PC-9 (cell line): ENCODE measurements at regions of chr21 and their contacts with region 1.

Region 1: GRCh38 chr21:33441489-33442477 is 38.0 kb downstream of the TMEM50B start:
- DNase-seq: peak in 1 of 2 experiments; percentile 22
- H3K4me3 ChIP-seq: no peak overlapping the region
- H3K27ac ChIP-seq: no peak overlapping the region
- H3K4me1 ChIP-seq: no peaks in the 10 kb centered on the region
- H3K27me3 ChIP-seq: no peaks in the 10 kb centered on the region
- CTCF ChIP-seq: no peak

Region 2: DNA sequence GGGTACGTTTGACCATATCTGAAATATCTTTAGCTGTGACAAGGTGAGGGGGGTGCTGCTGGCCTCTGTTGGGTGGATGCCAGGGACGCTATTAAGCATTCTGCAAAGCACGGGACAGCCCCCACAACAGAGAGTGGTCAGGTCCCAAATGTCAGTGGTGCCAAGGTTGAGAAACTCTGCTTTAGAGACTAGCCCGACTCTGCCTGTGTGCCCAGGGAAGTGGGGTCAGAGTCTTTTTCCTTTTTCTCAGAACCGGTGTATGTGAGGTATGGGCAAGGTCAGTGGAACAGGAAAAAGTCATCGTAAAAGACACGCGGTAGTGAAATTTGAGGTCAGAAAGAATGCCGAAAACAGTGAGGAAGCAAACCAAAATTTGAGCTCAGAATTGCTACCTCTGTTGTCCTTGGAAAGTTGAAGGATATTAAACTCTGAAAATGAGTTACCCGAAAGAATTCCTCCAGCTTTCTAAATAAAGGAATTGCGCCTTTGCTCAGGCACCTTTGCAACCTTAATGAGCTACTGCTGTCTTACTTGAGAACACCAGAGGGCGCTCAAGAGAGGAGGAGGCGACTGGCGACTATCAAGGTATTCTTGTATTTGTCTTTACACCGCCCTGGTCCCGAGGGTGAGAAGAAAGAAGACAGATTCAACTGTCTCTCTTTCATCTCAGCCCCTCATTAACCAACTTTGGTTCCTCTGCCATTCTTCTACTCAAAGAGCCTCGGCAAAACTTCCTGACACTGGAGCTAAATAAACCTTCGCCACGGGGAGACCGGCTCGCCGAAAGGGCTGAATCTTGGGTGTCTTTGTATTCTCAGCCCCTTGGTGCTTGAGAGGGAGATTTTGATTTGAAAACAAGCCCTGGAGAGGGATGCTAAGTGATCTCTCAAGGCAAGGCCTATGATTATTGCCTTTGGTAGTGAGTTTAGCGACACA is 501.4 kb before region 1 on chr21:
- CTCF ChIA-PET with region 1: no interaction called
- POLR2A ChIA-PET with region 1: no interaction called
- intact Hi-C with region 1: loop called (anchors 10 kb)
- DNase-seq: peak in 1 of 2 experiments; percentile 5
- H3K4me3 ChIP-seq: no peak overlapping the region
- H3K27ac ChIP-seq: no peak overlapping the region
- H3K4me1 ChIP-seq: no peaks in the 10 kb centered on the region
- H3K27me3 ChIP-seq: peaks cover 26% of the 10 kb centered on the region; the same call in 1 of the 2 replicates
- CTCF ChIP-seq: peak; percentile 65

Region 3: DNA sequence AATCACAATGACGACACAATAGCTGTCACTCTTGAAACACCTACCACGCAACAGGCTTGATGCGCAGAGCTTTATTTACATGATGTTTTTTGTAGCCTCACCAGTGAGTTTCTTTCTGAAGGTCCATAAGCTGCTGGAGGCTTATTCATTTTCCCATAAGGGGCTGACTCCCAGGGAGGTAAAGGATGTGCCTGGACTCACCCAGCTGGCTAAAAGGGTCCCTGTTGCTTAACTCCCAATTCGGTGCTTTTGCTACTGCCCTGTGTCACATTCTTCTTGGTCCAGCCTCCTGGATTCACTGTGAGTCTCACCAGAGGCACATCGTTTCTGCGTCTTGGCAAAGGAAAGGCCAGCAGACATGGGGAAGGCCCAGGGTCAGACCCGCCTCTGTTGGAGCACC is 460.7 kb before region 1 on chr21:
- CTCF ChIA-PET with region 1: no interaction called
- POLR2A ChIA-PET with region 1: no interaction called
- intact Hi-C with region 1: no loop called
- DNase-seq: no peak
- H3K4me3 ChIP-seq: no peak overlapping the region
- H3K27ac ChIP-seq: no peak overlapping the region
- H3K4me1 ChIP-seq: no peaks in the 10 kb centered on the region
- H3K27me3 ChIP-seq: peaks cover 47% of the 10 kb centered on the region
- CTCF ChIP-seq: no peak

Region 4: GRCh38 chr21:33206771-33207325 is 234.9 kb before region 1 on chr21:
- CTCF ChIA-PET with region 1: no interaction called
- POLR2A ChIA-PET with region 1: no interaction called
- intact Hi-C with region 1: no loop called
- DNase-seq: no peak
- H3K4me3 ChIP-seq: no peak overlapping the region
- H3K27ac ChIP-seq: no peak overlapping the region
- H3K4me1 ChIP-seq: peaks cover 11% of the 10 kb centered on the region
- H3K27me3 ChIP-seq: no peaks in the 10 kb centered on the region
- CTCF ChIP-seq: no peak

Region 5: DNA sequence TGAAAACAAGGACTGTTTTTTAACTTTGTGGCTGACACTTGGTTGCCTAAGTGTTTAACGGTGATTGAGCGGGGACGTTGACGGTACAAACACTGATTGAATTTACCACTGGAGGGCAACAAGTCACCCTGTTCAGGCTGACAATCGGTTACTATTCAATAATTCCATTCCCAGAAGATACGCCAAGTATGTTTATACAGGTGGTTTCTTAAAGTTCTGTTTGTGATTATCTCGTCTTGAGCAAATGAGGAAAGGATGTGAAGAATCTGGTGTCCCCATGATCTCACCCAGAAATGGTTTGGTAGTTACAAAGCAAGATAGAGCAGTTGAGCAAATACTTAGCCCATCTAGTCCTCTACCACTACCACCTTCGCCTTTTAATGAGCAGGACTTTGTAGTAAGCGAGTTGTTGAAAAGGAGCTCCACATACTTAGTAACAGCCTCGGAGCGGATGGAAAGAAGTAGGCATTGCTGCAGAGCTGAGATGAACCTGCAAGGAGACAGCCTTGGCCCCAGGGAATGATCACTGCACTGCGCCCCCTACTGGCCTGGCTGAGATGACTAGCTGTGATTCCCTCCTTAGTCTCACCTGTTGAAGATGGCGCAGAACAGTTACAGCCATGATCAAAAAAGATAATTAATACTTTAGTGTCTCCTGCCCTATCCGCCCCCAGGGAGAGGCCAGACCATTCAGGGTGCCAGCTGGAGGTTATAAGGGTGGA is 80.7 kb before region 1 on chr21:
- CTCF ChIA-PET with region 1: interaction called, 8 read pairs
- POLR2A ChIA-PET with region 1: interaction called, 3 read pairs
- intact Hi-C with region 1: loop called (anchors 2 kb)
- DNase-seq: peak in 1 of 2 experiments; percentile 66
- H3K4me3 ChIP-seq: no peak overlapping the region
- H3K27ac ChIP-seq: no peak overlapping the region
- H3K4me1 ChIP-seq: 0 out of 2 replicates have a peak, but pooled peaks cover 6% of the 10 kb centered on the region
- H3K27me3 ChIP-seq: no peaks in the 10 kb centered on the region
- CTCF ChIP-seq: peak; percentile 73

Region 6: GRCh38 chr21:33374450-33375096 is 67.2 kb before region 1 on chr21:
- CTCF ChIA-PET with region 1: no interaction called
- POLR2A ChIA-PET with region 1: interaction called, 6 read pairs
- intact Hi-C with region 1: loop called (anchors 2 kb)
- DNase-seq: peak; percentile 32 to 98
- H3K4me3 ChIP-seq: no peak overlapping the region
- H3K27ac ChIP-seq: peak overlapping the region; percentile 81
- H3K4me1 ChIP-seq: peaks cover 34% of the 10 kb centered on the region
- H3K27me3 ChIP-seq: no peaks in the 10 kb centered on the region
- CTCF ChIP-seq: peak; percentile 71

Region 7: GRCh38 chr21:33428669-33429068 is 13.1 kb before region 1 on chr21:
- CTCF ChIA-PET with region 1: no interaction called
- POLR2A ChIA-PET with region 1: no interaction called
- intact Hi-C with region 1: no loop called
- DNase-seq: peak; percentile 33 to 43
- H3K4me3 ChIP-seq: no peak overlapping the region
- H3K27ac ChIP-seq: no peak overlapping the region
- H3K4me1 ChIP-seq: peaks cover 8% of the 10 kb centered on the region; the same call in 1 of the 2 replicates
- H3K27me3 ChIP-seq: no peaks in the 10 kb centered on the region
- CTCF ChIP-seq: no peak